ENCODE measurements at regions of chr4 and their contacts with region 1.

Region 1: DNA sequence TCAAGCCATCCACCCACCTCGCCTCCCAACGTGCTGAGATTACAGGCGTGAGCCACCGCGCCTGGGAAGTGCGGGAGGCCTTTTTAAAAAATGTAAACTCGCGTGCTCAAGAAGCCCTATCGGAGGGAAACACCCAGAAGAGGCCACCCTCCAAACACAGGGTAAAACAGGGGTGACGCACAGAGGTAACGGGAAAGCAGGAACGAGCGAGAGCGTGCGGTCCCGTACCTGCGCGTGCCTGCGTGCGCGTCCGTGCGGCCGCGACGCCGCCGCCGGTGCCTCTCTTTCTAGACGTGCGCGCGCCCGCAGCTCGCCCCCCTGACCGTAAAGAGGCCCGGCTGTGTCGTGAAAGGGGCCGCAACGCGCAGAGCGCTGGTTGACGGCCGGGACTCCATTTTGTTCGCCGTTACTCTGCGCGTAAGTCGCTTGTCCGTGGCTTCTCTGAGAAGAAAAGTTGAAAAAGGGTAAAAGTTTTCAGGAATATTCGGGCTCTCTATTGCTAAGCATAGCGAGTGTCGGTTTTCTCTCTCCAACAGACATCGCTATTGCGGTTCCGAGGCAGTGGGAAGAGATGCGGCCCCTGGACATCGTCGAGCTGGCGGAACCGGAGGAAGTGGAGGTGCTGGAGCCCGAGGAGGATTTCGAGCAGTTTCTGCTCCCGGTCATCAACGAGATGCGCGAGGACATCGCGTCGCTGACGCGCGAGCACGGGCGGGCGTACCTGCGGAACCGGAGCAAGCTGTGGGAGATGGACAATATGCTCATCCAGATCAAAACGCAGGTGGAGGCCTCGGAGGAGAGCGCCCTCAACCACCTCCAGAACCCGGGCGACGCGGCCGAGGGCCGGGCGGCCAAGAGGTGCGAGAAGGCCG is at the start of gene MRFAP1:
- DNase-seq: peak; percentile 94 to 96
- ATAC-seq: peak; percentile 92 to 97 (median 96)
- H3K4me3 ChIP-seq: peak within 1 kb of the TSS; percentile 74 to 96 (median 86)
- H3K27ac ChIP-seq: peak within 1 kb of the TSS; percentile 86 to 93 (median 90)
- H3K4me1 ChIP-seq: peaks cover 14 to 40% (median 34%) of the 10 kb centered on the region in 9 donors
- H3K27me3 ChIP-seq: no peaks in the 10 kb centered on the region
- CTCF ChIP-seq: no peak
- total RNA-seq, gene MRFAP1: 222 to 268 (median 248) TPM

Region 2: DNA sequence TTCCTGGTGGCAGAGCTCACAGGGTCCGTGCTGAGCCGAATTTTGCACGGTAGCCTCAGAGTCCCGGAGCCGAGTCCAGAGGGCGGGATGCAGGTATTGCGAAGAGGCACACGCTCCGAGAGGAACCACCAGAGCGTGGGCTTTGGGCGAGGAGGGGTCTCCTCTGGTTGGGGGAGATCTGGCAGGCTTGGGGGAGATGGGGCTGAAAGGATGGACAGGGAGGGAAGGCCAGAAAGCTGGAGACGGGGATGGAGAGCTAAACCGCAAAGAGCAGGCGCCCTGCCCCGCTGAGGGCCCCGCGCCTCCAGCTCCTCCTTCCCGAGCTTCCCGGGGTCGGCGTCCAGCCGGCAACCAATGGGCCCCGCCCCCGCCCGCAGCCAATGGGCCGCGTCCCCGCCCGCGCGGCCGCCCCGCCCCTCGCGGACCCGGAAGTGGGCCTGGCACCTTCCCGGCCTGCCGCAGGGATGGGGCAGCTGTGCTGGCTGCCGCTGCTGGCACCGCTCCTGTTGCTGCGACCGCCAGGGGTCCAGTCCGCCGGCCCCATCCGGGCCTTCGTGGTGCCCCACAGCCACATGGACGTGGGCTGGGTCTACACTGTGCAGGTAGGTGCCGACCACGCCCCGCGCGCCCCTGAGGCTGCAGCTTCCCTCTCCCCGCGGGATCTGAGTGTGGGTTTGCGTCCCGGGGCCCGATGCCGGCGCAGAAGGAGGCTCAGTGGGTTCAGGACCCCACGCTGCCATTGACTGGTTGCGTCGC is 65.6 kb before region 1 on chr4 and contains the start of gene MAN2B2:
- intact Hi-C with region 1: loop called in 1 of 10 experiments (anchors 5 kb)
- DNase-seq: peak; percentile 86 to 92
- ATAC-seq: peak; percentile 95 to 98 (median 96)
- H3K4me3 ChIP-seq: peak within 1 kb of the TSS; percentile 70 to 99 (median 86)
- H3K27ac ChIP-seq: peak within 1 kb of the TSS in 9 of 10 donors; percentile 30 to 91 (median 55)
- H3K4me1 ChIP-seq: peaks cover 0 to 21% (median 15%) of the 10 kb centered on the region in 9 donors
- H3K27me3 ChIP-seq: no peaks in the 10 kb centered on the region
- CTCF ChIP-seq: peak in 1 of 9 donors; percentile 17
- total RNA-seq, gene MAN2B2: 14.6 to 27.1 (median 18.6) TPM

Region 3: DNA sequence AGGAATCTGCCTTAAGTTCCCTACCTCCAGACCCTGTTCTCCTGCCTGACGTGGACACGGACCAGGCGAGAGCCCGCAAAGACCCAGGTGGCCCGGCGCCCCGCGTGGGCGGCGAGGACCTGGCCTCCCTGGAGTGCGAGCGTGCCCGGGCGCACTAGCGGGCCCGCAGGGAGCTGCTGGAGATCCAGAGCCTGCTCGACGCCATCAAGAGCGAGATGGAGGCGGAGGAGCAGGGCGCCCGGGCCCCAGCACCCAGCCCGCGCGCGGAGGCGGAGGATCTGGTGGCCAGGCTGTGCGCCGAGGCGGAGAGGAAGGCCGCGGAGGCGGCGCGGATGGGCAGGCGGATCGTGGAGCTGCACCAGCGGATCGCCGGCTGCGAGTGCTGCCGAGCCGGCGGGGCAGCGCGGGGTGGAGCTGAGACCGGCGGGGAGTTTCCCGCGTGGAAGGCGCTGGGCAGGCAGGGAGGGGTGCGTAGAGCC is 18.1 kb after region 1 on chr4:
- intact Hi-C with region 1: no loop called
- DNase-seq: peak in 1 of 2 donors; percentile 59
- ATAC-seq: peak; percentile 60 to 83 (median 74)
- H3K4me3 ChIP-seq: peak overlapping the region; percentile 21 to 59 (median 46)
- H3K27ac ChIP-seq: peak overlapping the region in 8 of 10 donors; percentile 6 to 77 (median 58)
- H3K4me1 ChIP-seq: peaks cover 0 to 14% (median 8%) of the 10 kb centered on the region in 9 donors
- H3K27me3 ChIP-seq: peaks cover 0 to 58% (median 4%) of the 10 kb centered on the region in 7 donors
- CTCF ChIP-seq: no peak

Region 4: GRCh38 chr4:6673660-6674499 is 33.4 kb after region 1 on chr4:
- intact Hi-C with region 1: loop called in 1 of 10 experiments (anchors 1 kb)
- DNase-seq: peak; percentile 92 to 94
- ATAC-seq: peak; percentile 92 to 98 (median 94)
- H3K4me3 ChIP-seq: peak overlapping the region; percentile 36 to 97 (median 74)
- H3K27ac ChIP-seq: peak overlapping the region; percentile 63 to 92 (median 88)
- H3K4me1 ChIP-seq: peaks cover 14 to 41% (median 36%) of the 10 kb centered on the region in 9 donors
- H3K27me3 ChIP-seq: no peaks in the 10 kb centered on the region
- CTCF ChIP-seq: peak in 1 of 9 donors; percentile 15

Measured in heart right ventricle (tissue), 16 donors.